SK-N-SH (cell line): ENCODE measurements at regions of chr9 and their contacts with region 1.

Region 1: GRCh38 chr9:133023117-133023890 is 7.5 kb upstream of the GTF3C5 start:
- DNase-seq: no peak
- H3K4me3 ChIP-seq: no peak overlapping the region
- H3K27ac ChIP-seq: no peak overlapping the region
- H3K4me1 ChIP-seq: peaks cover 0 to 4% of the 10 kb centered on the region in 2 experiments; a peak in 1 of 4 replicates
- H3K27me3 ChIP-seq: no peaks in the 10 kb centered on the region; the same call in 1 of the 2 replicates
- CTCF ChIP-seq: no peak
- EP300 ChIP-seq: no peak
- RAD21 ChIP-seq: no peak

Region 2: DNA sequence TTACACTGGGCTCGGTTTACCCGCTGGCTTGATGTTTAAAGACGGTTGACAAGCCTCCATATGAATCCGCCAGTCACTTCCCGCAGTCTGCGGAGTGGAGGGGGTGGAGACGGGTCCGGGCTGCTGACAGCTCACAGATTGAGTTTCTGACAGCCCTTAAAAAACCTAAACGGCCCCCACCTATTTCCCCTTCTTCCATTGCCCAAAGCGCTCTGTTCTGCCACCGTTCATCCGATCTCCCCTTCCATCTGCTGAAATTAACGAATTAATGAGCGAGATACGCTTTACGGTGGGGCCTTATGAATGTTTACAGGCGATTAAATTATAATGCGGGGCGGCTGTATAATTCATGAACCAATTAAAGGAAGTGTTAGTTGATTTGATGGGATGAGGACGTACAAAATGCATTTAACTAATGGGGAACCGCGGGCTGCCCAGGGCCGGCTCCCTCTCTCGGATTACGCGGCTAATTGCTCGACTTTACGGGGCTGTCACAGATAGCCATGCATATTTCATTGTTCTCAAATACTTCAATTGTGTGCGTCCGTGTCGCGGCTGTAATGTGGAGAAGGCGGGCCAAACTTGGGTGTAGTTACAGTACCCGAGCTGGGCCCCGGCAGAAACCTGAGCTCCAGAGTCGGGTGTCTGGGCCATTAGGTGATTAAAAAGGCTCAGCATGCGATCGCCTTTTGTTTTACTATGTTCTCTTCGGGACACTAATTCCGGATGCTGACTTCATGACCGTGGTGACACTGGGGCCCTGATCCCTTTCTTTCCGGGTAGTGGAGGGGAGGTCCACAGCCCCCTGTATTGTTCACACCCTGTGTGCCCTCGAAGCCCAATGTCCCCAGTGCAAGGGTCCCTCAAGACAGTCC is 278.2 kb before region 1 on chr9:
- CTCF ChIA-PET with region 1: no interaction called
- POLR2A ChIA-PET with region 1: no interaction called
- DNase-seq: peak; percentile 7
- H3K4me3 ChIP-seq: no peak overlapping the region
- H3K27ac ChIP-seq: no peak overlapping the region
- H3K4me1 ChIP-seq: peaks cover 0 to 7% of the 10 kb centered on the region in 2 experiments; a peak in 1 of 4 replicates
- H3K27me3 ChIP-seq: no peaks in the 10 kb centered on the region; the same call in 1 of the 2 replicates
- CTCF ChIP-seq: no peak
- EP300 ChIP-seq: no peak
- RAD21 ChIP-seq: no peak

Region 3: DNA sequence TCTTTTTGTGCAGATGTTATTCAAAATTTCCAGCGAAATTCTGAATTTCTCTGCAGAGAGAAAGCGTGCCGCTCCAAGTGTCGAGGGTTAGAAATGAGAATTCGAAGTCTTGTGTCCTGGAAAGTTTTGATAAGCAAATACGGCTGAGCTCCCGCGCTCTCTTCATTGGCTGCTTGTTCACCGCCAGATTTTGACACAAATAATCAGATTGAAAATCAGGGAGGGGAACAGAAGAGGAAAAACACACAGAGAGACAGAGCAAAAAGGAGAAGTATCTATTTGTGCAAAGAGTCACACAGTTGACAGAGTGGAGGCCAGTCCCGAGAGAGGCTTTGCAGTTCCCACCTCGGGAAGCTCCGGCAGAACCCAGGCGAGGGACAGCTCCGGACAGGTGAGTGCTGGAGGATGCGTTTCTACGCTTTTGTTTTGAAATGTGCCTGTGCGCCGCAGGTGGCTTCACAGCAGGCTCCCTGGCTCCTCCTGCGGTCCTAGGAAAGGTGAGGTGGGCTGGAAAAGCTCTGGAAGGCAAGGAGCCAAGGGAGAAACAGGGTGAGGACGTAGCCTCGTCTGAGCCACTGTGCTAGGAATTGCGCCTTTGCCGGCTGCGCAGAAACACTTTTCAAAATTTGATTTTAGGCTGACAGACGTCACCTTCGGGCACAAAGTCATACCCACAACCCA is 44.7 kb before region 1 on chr9 and contains the start of gene GFI1B:
- CTCF ChIA-PET with region 1: interaction called, 43 read pairs
- POLR2A ChIA-PET with region 1: no interaction called
- DNase-seq: peak; percentile 16
- H3K4me3 ChIP-seq: no peak within 1 kb of the TSS; a peak in 2 of 4 replicates
- H3K27ac ChIP-seq: no peak within 1 kb of the TSS
- H3K4me1 ChIP-seq: peaks cover 0 to 7% of the 10 kb centered on the region in 2 experiments; a peak in 1 of 4 replicates
- H3K27me3 ChIP-seq: peaks cover 70% of the 10 kb centered on the region
- CTCF ChIP-seq: no peak
- EP300 ChIP-seq: no peak
- RAD21 ChIP-seq: no peak
- polyA plus RNA-seq, gene GFI1B: 0.03 TPM in 1 of 2 replicates, not detected in the other

Region 4: GRCh38 chr9:133004091-133004998 is 19.0 kb before region 1 on chr9:
- CTCF ChIA-PET with region 1: interaction called, 39 read pairs
- POLR2A ChIA-PET with region 1: no interaction called
- DNase-seq: peak; percentile 20
- H3K4me3 ChIP-seq: no peak overlapping the region
- H3K27ac ChIP-seq: no peak overlapping the region
- H3K4me1 ChIP-seq: no peaks in the 10 kb centered on the region; a peak in 1 of 4 replicates
- H3K27me3 ChIP-seq: peaks cover 18% of the 10 kb centered on the region; the same call in 1 of the 2 replicates
- CTCF ChIP-seq: no peak
- EP300 ChIP-seq: no peak
- RAD21 ChIP-seq: no peak

Region 5: GRCh38 chr9:133115448-133116345 is 92.4 kb after region 1 on chr9:
- CTCF ChIA-PET with region 1: interaction called, 12 read pairs
- POLR2A ChIA-PET with region 1: interaction called, 3 read pairs
- DNase-seq: no peak
- H3K4me3 ChIP-seq: no peak overlapping the region
- H3K27ac ChIP-seq: peak overlapping the region in 1 of 2 experiments; percentile 99; a peak in 2 of 4 replicates
- H3K4me1 ChIP-seq: peaks cover 22 to 84% of the 10 kb centered on the region in 2 experiments
- H3K27me3 ChIP-seq: no peaks in the 10 kb centered on the region
- CTCF ChIP-seq: no peak
- EP300 ChIP-seq: no peak
- RAD21 ChIP-seq: no peak

Region 6: GRCh38 chr9:133184962-133185361 is 161.7 kb after region 1 on chr9:
- CTCF ChIA-PET with region 1: interaction called, 11 read pairs
- POLR2A ChIA-PET with region 1: no interaction called
- DNase-seq: peak; percentile 77
- H3K4me3 ChIP-seq: peak overlapping the region in 1 of 2 experiments; percentile 25; a peak in 1 of 4 replicates
- H3K27ac ChIP-seq: no peak overlapping the region
- H3K4me1 ChIP-seq: no peaks in the 10 kb centered on the region
- H3K27me3 ChIP-seq: peaks cover 44% of the 10 kb centered on the region
- CTCF ChIP-seq: peak; percentile 63
- EP300 ChIP-seq: no peak
- RAD21 ChIP-seq: peak; percentile 84